Activated T-helper 1 cell treated with anti-CD3 and anti-CD28 coated beads, Interleukin-12 subunit alpha, Interleukin-12 subunit beta, Interleukin-2, Interleukin-4 antibody, amounts not matched to agents 30 ng/mL and 10 ng/mL and 1 ng/mL, durations not matched to agents 14 hours and 24 hours and 36 hours (primary cell): ENCODE measurements at regions of chr2 and their contacts with region 1.

Region 1: GRCh38 chr2:240624950-240625621 is at the start of gene GPR35:
- DNase-seq: peak; percentile 76
- H3K4me3 Mint-ChIP-seq: peak within 1 kb of the TSS; percentile 69
- H3K27ac Mint-ChIP-seq: peak within 1 kb of the TSS; percentile 83
- H3K4me1 Mint-ChIP-seq: peaks cover 47% of the 10 kb centered on the region
- H3K27me3 Mint-ChIP-seq: no peaks in the 10 kb centered on the region
- total RNA-seq, gene GPR35: 7.6 and 8.2 TPM in 2 replicates

Region 2: DNA sequence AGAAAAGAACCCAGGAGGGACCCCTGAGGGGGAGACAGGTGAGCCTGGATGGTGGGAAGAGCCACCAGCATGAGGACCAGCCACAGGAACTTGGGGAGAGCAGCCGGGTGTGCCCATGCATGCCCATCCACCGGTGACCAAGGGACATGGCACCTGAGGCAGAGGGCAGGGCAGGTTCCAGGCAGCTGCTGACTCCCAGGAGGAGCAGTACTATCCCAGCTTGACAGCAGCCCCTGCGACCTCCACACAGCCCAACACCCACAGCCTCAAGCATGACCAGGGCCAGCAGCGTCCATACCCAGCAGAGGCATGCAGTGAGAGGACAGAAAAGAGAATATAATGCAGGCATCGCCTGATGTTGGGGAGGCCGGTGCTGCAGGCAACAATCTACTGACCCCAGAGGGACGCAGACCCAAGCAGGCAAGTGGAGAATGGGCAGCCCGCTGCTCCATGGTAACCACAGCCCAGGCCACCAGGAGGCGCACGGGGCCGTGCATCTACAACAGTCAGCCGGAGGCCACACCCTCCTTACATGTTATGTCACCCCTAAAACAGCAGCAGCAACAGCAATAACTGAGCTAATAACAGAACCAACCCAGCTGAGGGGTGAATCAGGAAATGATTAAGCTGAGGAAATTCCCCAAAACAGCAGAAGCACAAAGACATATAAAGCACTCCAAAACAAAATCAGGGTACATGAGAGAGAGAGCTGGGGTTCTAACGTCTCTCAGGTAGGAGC is 111.4 kb before region 1 on chr2:
- intact Hi-C with region 1: loop called (anchors 5 kb)
- DNase-seq: peak; percentile 74
- H3K4me3 Mint-ChIP-seq: no peak overlapping the region
- H3K27ac Mint-ChIP-seq: peak overlapping the region; percentile 9
- H3K4me1 Mint-ChIP-seq: peaks cover 9% of the 10 kb centered on the region
- H3K27me3 Mint-ChIP-seq: no peaks in the 10 kb centered on the region

Region 3: GRCh38 chr2:240566203-240567136 is 58.6 kb before region 1 on chr2:
- intact Hi-C with region 1: loop called (anchors 1 kb)
- DNase-seq: peak; percentile 93
- H3K4me3 Mint-ChIP-seq: peak overlapping the region; percentile 93
- H3K27ac Mint-ChIP-seq: peak overlapping the region; percentile 99
- H3K4me1 Mint-ChIP-seq: peaks cover 83% of the 10 kb centered on the region
- H3K27me3 Mint-ChIP-seq: no peaks in the 10 kb centered on the region

Region 4: DNA sequence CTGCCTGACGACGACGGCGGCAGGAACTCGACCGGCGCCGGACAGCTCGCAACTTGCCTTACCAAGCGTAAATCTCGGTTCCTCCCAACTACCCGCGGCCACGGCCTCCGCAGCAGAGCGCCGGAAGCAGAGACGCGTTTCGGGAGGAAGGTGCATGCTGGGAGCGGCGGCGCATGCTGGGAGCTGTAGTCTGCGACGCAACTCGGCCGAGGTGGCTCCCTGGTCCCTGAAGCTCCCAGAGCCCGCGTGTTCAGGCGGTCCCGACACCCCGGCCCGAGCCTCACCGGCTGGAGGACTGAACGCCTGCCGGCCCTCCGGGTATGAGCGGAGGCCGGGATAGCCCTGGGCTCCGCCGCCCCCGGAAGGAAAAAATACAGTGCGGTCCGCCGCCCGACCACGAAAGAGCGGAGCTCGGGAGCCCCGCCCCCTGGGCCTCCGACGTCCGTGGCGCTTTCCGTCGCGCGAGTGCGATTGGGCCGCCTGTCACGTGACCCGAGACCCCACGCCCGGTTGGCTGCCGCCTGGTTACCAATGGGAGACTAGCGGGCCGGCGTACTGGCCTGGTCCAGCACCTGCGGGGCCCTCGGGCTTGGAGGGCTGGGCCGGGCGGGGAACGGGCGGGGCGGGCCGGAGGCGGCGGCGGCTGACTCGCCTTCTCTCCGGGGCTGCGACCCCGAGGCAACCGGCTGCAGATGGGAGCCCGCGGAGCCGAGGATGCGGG is 38.7 kb before region 1 on chr2 and contains the start of gene CAPN10:
- intact Hi-C with region 1: loop called (anchors 1 kb)
- DNase-seq: peak; percentile 97
- H3K4me3 Mint-ChIP-seq: peak within 1 kb of the TSS; percentile 96
- H3K27ac Mint-ChIP-seq: peak within 1 kb of the TSS; percentile 93
- H3K4me1 Mint-ChIP-seq: peaks cover 38% of the 10 kb centered on the region
- H3K27me3 Mint-ChIP-seq: no peaks in the 10 kb centered on the region
- total RNA-seq, gene CAPN10: 49.8 and 55.4 TPM in 2 replicates

Region 5: DNA sequence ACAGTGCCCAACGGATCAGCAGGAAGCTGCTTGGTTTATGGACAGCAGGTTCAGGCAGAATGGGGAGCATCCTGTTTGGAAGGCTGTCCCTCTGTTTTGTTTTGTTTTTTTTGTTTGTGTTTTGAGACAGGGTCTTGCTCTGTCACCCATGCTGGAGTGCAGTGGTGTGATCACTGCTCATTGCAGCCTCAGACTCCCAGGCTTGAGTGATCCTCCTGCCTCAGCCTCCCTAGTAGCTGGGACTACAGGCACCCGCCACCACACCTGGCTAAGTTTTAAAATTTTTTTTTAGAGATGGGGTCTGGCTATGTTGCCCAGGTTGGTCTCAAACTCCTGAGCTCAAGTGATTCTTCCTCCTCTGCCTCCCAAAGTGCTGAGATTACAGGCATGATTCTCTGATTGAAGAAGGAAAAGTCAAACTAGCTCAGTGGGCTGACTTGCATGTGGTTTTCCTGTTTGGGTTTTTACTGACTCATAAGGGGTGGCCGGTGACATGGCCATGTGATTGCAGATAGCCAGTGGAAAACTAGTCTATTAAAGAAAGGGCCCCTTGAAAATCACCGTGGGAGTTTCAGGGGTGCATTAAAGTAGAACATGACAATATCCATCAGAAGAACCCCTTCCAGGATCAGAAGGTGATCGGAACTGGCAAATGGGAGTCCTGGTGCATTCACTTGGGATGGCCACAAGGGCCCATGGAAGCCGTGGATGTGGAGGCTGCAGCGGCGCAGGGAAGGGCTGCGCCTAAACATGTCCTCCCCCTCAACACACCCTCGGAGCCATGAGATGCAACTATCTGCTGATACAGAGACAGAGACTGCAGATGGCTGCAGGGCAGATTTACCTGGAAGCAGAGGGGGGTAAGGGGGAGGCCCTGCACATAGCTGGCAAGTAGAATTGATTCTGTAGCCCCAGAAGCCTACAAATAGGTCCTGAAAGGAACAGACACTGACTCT is 31.1 kb after region 1 on chr2:
- intact Hi-C with region 1: loop called (anchors 5 kb)
- DNase-seq: no peak
- H3K4me3 Mint-ChIP-seq: no peak overlapping the region
- H3K27ac Mint-ChIP-seq: no peak overlapping the region
- H3K4me1 Mint-ChIP-seq: peaks cover 16% of the 10 kb centered on the region
- H3K27me3 Mint-ChIP-seq: peaks cover 59% of the 10 kb centered on the region